Common myeloid progenitor, CD34-positive (primary cell): ENCODE measurements at regions of chr7 and their contacts with region 1.

Region 1: DNA sequence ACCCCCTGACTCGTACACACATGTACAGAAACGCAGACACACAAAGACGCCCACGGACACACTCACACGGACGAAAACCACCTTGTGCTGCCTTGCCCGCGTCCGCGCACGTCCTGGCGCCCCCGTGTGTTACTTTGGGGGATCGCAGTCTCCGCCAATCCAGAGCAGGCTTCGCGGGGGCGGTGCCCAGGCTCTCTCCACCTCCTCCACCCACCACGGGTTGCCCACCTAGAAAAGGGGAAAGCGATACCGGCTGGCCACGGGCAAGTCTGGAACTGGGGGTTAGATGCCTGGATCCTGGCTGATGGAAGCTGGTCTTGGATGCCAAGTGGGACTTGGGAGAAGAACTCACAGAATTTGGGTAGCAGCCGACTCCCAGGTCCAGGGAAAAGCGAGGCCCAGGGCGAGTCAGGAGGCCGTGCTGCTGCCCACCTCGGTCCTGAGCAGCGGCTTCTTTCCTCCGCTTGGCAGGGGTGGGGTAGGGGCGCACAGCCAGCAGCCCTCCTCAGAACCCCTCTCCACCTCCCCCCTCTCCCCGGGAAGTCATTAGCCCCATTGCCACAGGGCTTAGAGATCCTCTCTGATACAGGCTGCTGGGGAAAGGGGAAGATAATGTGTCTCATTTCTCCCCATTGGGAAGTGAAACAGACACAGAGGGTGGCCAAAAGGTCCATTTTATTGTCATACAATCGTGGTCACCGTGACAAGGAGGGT is 4.6 kb upstream of the VGF start:
- DNase-seq: peak; percentile 69 to 87 (median 85)
- H3K4me3 ChIP-seq: no peak overlapping the region
- H3K27ac ChIP-seq: no peak overlapping the region
- H3K4me1 ChIP-seq: peaks cover 0 to 62% (median 47%) of the 10 kb centered on the region in 4 experiments
- H3K27me3 ChIP-seq: peaks cover 5 to 99% (median 63%) of the 10 kb centered on the region in 5 experiments

Region 2: GRCh38 chr7:101153969-101154692 is 15.9 kb before region 1 on chr7 and contains the start of gene AP1S1:
- CTCF ChIA-PET with region 1: interaction called, 10 read pairs
- POLR2A ChIA-PET with region 1: no interaction called
- DNase-seq: peak; percentile 87 to 90 (median 89)
- H3K4me3 ChIP-seq: peak within 1 kb of the TSS; percentile 41 to 80 (median 66)
- H3K27ac ChIP-seq: peak within 1 kb of the TSS in 1 of 2 experiments; percentile 25
- H3K4me1 ChIP-seq: peaks cover 0 to 11% (median 8%) of the 10 kb centered on the region in 4 experiments
- H3K27me3 ChIP-seq: peaks cover 0 to 9% (median 2%) of the 10 kb centered on the region in 5 experiments

Region 3: DNA sequence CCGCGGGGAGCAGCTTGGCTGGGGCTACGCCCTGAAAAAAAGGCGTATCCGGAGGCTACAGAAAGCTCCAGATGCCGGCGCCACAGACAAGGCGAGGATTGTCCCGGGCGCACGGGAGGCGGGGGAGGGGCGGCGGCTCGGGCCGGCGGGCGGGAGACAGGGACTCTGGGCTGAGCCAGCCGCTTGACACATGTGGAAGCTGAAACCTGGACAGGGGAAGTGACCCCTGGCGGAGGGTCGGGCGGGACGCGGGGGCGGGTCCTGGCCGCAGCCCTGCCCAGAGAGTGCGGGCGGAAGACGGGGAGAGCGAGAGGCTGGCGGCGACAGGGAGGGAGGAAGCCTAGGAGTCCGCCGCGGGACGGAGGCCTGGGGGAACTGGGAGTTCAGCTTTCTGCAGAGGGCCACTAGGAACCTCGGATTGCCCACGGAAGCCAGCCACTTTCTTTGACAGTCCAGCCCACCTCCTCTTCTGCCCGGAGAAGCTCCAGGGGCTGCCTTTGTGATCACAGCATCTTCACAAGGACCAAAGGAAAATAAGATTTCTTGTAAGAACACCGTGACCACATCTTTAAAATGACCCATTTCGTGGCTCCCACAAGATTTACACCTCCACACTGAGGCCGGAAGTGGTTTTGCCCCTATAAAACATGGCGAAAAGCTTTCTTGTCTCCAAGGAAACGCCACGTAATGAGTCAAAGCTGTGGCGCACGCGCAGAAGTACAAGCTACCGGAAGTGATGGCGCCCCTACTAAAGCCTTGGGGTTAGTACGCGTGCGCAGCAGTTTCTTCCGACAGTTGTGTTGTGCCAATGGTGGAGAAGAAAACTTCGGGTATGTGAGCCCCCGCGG is 47.6 kb after region 1 on chr7 and contains the starts of genes PLOD3 and ZNHIT1:
- CTCF ChIA-PET with region 1: no interaction called
- POLR2A ChIA-PET with region 1: no interaction called
- DNase-seq: peak; percentile 97 to 99 (median 98)
- H3K4me3 ChIP-seq: peak within 1 kb of the TSS; percentile 71 to 98 (median 94)
- H3K27ac ChIP-seq: peak within 1 kb of the TSS; percentile 83 to 94
- H3K4me1 ChIP-seq: peaks cover 3 to 29% (median 25%) of the 10 kb centered on the region in 4 experiments
- H3K27me3 ChIP-seq: no peaks in the 10 kb centered on the region

Region 4: GRCh38 chr7:101299511-101300464 is 129.8 kb after region 1 on chr7:
- CTCF ChIA-PET with region 1: no interaction called
- POLR2A ChIA-PET with region 1: no interaction called
- DNase-seq: no peak
- H3K4me3 ChIP-seq: no peak overlapping the region
- H3K27ac ChIP-seq: no peak overlapping the region
- H3K4me1 ChIP-seq: peaks cover 0 to 6% (median 1%) of the 10 kb centered on the region in 4 experiments
- H3K27me3 ChIP-seq: peaks cover 12 to 82% (median 45%) of the 10 kb centered on the region in 5 experiments